Gastrocnemius medialis (tissue), 4 donors: ENCODE measurements at regions of chr1 and their contacts with region 1.

Region 1: GRCh38 chr1:17045634-17046333 is 8.0 kb downstream of the SDHB start:
- DNase-seq: no peak
- ATAC-seq: peak; percentile 62 to 65
- H3K4me3 ChIP-seq: peak overlapping the region in 2 of 4 donors; percentile 1 to 12
- H3K27ac ChIP-seq: peak overlapping the region; percentile 24 to 62 (median 33)
- H3K4me1 ChIP-seq: peaks cover 9 to 24% of the 10 kb centered on the region in 2 donors
- H3K27me3 ChIP-seq: no peaks in the 10 kb centered on the region
- CTCF ChIP-seq: peak; percentile 54 to 82 (median 67)
- POLR2A ChIP-seq: no peak

Region 2: GRCh38 chr1:16960560-16961296 is 85.1 kb before region 1 on chr1:
- in situ Hi-C with region 1: loop called in 3 of 4 experiments (anchors 5 to 10 kb)
- intact Hi-C with region 1: no loop called
- DNase-seq: peak; percentile 56 to 68
- ATAC-seq: peak; percentile 55 to 75
- H3K4me3 ChIP-seq: peak overlapping the region; percentile 21 to 45 (median 36)
- H3K27ac ChIP-seq: peak overlapping the region in 2 of 4 donors; percentile 9 to 31
- H3K4me1 ChIP-seq: peaks cover 6% of the 10 kb centered on the region in 2 donors
- H3K27me3 ChIP-seq: no peaks in the 10 kb centered on the region
- CTCF ChIP-seq: peak; percentile 46 to 68 (median 59)
- POLR2A ChIP-seq: no peak

Region 3: DNA sequence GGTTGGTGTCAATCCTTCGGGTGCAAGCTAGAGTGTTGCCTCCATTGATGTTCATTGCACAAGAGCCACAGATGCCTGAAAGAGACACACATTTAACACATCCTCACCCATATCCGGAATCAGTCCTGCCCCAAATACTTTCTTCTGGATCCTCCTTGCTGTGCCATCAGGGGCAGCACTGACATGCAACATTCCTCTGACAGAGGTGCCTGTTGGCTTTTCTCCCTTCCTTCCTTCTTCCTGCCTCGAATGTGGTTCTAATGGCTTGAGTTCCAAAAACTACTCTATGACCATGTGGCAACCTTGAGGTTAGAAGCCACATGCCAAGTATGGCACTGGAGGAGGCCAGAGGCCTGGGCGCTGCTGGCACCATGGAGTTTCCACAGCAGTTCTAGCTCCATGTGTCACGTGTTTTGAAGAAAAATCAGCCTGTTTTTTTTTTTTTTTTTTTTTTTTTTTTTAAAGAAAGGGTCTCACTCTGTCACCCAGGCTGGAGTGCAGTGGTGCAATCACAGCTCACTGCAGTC is 17.1 kb before region 1 on chr1:
- in situ Hi-C with region 1: no loop called
- intact Hi-C with region 1: loop called (anchors 1 kb)
- DNase-seq: no peak
- ATAC-seq: peak in 1 of 2 donors; percentile 35
- H3K4me3 ChIP-seq: no peak overlapping the region
- H3K27ac ChIP-seq: peak overlapping the region in 1 of 4 donors; percentile 29
- H3K4me1 ChIP-seq: no peaks in the 10 kb centered on the region
- H3K27me3 ChIP-seq: no peaks in the 10 kb centered on the region
- CTCF ChIP-seq: no peak
- POLR2A ChIP-seq: no peak

Region 4: GRCh38 chr1:17192394-17193221 is 146.8 kb after region 1 on chr1:
- in situ Hi-C with region 1: no loop called
- intact Hi-C with region 1: no loop called
- DNase-seq: no peak
- ATAC-seq: no peak
- H3K4me3 ChIP-seq: no peak overlapping the region
- H3K27ac ChIP-seq: no peak overlapping the region
- H3K4me1 ChIP-seq: no peaks in the 10 kb centered on the region
- H3K27me3 ChIP-seq: no peaks in the 10 kb centered on the region
- CTCF ChIP-seq: no peak
- POLR2A ChIP-seq: no peak